Activated T-helper 1 cell treated with anti-CD3 and anti-CD28 coated beads, Interleukin-12 subunit alpha, Interleukin-12 subunit beta, Interleukin-2, Interleukin-4 antibody, amounts not matched to agents 30 ng/mL and 10 ng/mL and 1 ng/mL, durations not matched to agents 14 hours and 24 hours and 36 hours (primary cell): ENCODE measurements at regions of chr5 and their contacts with region 1.

Region 1: DNA sequence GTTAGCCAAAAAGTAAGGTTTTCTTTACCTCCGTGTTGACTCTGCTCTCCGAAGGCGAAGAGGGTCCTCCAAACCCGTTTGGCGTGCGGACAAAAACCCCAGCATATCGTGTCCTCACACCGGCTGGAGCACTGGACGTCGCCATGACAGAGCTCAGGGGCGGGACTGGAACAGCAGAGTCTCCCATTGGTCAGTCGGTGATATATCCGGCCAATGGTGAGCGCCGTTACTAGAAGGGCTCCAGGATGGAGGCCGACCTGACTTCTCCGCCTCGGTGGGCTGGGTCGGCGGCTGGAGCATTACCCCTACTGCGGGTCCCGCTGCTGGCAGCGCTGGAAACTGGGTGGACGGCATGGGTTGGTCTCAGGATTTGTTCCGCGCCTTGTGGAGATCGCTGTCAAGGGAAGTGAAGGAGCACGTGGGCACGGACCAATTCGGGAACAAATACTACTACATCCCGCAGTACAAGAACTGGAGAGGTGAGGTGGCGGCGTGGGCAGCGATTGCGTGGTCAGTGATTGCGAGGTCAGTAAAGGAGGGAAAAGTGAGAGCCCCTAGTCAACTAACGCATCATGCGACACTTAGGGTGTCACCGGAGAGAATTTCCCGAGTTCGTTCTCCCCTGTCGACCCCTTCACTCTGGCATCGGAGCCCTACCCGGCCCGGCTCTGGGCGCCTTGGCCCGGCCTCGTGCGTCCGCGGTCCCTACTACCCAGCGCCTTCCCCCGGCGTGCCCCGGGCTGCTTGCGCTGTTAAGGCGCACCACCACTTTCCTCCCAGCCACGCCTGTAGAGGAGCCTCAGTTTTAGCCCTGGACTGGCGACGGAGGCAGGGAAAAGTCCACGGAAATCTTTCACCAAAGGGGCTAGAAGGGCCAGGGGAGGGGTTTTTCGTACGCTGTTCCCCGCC is at the starts of genes ERCC8 and NDUFAF2:
- DNase-seq: peak; percentile 85
- H3K4me3 Mint-ChIP-seq: no peak within 1 kb of the TSS
- H3K27ac Mint-ChIP-seq: no peak within 1 kb of the TSS
- H3K4me1 Mint-ChIP-seq: peaks cover 22% of the 10 kb centered on the region
- H3K27me3 Mint-ChIP-seq: no peaks in the 10 kb centered on the region
- total RNA-seq, gene ERCC8: 9.8 and 10.7 TPM in 2 replicates
- total RNA-seq, gene NDUFAF2: 32.9 and 33.8 TPM in 2 replicates

Region 2: DNA sequence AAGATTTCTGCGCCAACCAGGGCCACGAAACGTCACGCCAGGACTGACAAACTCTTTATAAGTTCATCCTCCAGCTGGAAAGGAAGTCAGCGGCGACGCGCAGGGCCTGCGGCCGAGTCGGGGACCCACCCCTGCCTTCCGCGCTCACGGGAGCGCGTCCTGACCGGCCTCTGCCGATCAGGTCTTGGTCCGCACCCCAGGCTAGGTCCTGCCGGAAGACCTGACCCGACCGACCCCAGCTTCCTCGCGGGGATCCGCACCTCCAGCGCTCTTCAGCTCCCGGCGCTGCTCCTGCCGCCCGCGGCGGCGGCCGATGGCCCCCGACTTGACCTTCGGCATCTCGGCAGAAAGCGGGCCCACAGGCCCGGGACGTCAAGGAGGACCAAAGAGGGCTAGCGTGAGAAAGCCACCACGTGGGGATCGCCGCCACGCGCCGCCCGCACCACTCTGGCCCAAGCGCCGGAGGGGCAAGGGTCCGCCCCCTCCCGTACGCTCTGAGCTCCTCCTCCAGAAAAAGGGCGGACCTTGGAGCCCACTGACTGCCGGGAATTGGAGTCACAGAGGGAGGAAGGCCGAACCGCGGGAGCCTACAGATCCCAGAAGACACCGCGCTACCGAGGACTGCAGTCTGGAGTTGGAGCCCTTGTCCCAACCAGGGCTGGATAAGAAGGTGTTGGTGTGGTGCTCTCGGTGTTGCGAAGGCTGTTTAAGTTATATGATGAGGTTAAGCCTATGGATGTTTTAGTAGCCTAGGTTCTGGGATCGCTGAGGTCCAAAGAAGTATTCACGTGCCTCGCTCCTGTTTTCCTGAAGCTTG is 1458.5 kb after region 1 on chr5 and contains the start of gene DIMT1:
- intact Hi-C with region 1: loop called (anchors 2 kb)
- DNase-seq: peak; percentile 93
- H3K4me3 Mint-ChIP-seq: peak within 1 kb of the TSS; percentile 95
- H3K27ac Mint-ChIP-seq: peak within 1 kb of the TSS; percentile 94
- H3K4me1 Mint-ChIP-seq: peaks cover 34% of the 10 kb centered on the region
- H3K27me3 Mint-ChIP-seq: no peaks in the 10 kb centered on the region
- total RNA-seq, gene DIMT1: 42.4 and 45.0 TPM in 2 replicates